T-cell (primary cell): ENCODE measurements at regions of chr20 and their contacts with region 1.

Region 1: DNA sequence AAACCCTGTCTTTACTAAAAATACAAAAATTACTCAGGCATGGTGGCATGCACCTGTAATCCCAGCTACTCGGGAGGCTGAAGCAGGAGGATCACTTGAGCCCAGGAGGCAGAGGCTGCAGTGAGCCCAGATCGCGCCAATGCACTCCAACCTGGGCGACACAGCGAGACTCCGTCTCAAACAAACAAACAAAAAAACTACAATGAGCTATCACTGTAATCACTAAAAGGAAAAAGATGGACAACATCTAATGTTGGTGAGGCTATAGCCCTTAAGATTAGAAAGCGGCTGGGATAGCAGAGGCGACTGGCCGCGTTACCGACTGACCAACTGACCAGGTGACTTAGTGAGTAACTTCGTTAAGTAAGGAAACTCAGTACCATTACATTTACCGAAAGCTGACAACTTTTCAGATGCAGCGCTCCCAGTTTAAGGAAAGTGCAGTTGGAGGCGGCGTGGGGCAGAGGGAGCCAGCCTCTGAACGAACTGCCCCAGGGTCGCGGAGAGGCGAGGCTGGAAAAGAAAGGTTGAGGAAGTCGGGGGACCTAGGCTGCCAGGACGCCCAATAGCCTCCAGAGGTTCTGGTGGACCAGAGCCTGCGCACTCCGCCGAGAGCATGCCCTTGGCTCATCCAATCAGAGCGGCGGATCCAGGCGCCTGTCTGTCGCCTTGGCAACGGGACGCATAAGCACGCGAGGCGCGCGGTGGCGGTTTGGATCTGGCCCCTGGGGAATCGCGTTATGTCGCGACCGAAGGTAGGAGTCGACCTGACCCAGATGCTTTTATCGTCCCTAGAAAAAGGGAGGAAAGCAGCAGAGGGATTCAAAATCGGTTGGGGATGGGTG is 8.9 kb downstream of the TTLL9 start:
- DNase-seq: peak; percentile 47 to 86 (median 66)
- ATAC-seq: peak; percentile 85 to 95 (median 88)
- H3K4me3 ChIP-seq: peak overlapping the region; percentile 65 to 90
- H3K4me3 Mint-ChIP-seq: peak overlapping the region; percentile 88 to 91 (median 88)
- H3K27ac ChIP-seq: no peak overlapping the region
- H3K27ac Mint-ChIP-seq: peak overlapping the region in 1 of 2 donors; percentile 70
- H3K4me1 ChIP-seq: peaks cover 4 to 12% of the 10 kb centered on the region in 2 experiments
- H3K4me1 Mint-ChIP-seq: peaks cover 16 to 19% (median 17%) of the 10 kb centered on the region in 3 donors
- H3K27me3 ChIP-seq: peaks cover 3 to 11% of the 10 kb centered on the region in 2 experiments
- H3K27me3 Mint-ChIP-seq: peaks cover 3 to 9% of the 10 kb centered on the region in 2 donors

Region 2: GRCh38 chr20:31605031-31605901 is 274.1 kb before region 1 on chr20 and contains the start of gene ID1:
- CTCF ChIA-PET with region 1: no interaction called
- POLR2A ChIA-PET with region 1: interaction called in 1 of 2 experiments, 10 read pairs
- DNase-seq: peak; percentile 78 to 93 (median 88)
- ATAC-seq: peak; percentile 93 to 96 (median 94)
- H3K4me3 ChIP-seq: peak within 1 kb of the TSS; percentile 46 to 81
- H3K4me3 Mint-ChIP-seq: peak within 1 kb of the TSS; percentile 85 to 93 (median 88)
- H3K27ac ChIP-seq: no peak within 1 kb of the TSS
- H3K27ac Mint-ChIP-seq: peak within 1 kb of the TSS in 1 of 2 donors; percentile 17
- H3K4me1 ChIP-seq: peaks cover 8 to 29% of the 10 kb centered on the region in 2 experiments
- H3K4me1 Mint-ChIP-seq: peaks cover 28 to 31% (median 30%) of the 10 kb centered on the region in 3 donors
- H3K27me3 ChIP-seq: peaks cover 4 to 82% of the 10 kb centered on the region in 2 experiments
- H3K27me3 Mint-ChIP-seq: peaks cover 20 to 47% of the 10 kb centered on the region in 2 donors
- total RNA-seq, gene ID1: 1.4 to 11.2 (median 2.2) TPM

Region 3: GRCh38 chr20:31851240-31851955 is 28.0 kb before region 1 on chr20:
- CTCF ChIA-PET with region 1: interaction called in 1 of 2 experiments, 11 read pairs
- POLR2A ChIA-PET with region 1: no interaction called
- DNase-seq: no peak
- ATAC-seq: no peak
- H3K4me3 ChIP-seq: no peak overlapping the region
- H3K4me3 Mint-ChIP-seq: no peak overlapping the region
- H3K27ac ChIP-seq: no peak overlapping the region
- H3K27ac Mint-ChIP-seq: no peak overlapping the region
- H3K4me1 ChIP-seq: peaks cover 0 to 6% of the 10 kb centered on the region in 2 experiments
- H3K4me1 Mint-ChIP-seq: peaks cover 0 to 1% (median 0%) of the 10 kb centered on the region in 3 donors
- H3K27me3 ChIP-seq: peaks cover 0 to 51% of the 10 kb centered on the region in 2 experiments
- H3K27me3 Mint-ChIP-seq: peaks cover 15 to 34% of the 10 kb centered on the region in 2 donors

Region 4: DNA sequence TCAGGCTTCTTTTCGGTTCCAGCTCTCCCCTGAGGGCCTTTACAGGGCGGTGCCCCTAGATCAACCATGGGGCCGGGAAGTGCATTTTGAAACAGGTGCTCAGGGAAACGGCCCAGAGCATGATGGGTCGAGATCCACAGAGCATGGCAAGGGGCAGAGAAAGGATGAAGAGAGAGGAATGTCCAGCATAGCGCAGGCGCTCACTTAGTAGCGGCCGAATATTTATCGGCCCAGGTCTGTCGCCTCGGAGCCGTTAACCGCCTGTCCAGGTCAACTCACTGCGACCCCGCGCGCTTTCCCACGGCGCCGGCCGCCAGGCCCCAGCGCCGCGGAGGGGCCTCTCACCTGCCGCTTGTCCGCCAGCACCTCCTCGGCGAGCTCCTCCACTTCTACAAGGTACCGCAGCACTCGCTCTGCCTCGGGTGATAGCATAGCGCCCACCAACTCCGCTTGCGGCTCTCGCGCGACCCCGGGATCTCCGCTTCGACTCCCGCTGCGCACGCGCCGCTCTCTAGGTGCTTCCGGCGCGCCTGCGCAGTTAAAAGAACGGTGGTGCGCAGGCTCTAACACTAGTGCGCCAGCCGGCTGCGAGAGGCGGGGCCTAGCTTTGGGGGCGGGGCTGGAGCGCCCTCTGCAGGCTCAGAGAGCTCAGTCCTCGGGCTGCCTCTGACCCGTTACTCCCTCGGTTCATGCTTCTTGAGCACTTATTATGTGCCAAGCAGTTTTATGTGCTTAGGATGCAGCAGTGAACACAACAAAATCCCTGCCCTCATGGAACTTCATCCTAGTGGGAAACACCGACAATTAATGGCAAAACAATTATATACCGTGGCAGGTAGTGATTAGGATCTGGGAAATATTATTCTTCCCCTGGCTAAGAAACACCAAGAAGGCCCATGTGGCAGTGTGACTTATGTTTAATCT is 72.4 kb after region 1 on chr20 and contains the start of gene PDRG1:
- CTCF ChIA-PET with region 1: interaction called in 1 of 2 experiments, 18 read pairs
- POLR2A ChIA-PET with region 1: interaction called in 1 of 2 experiments, 3 read pairs
- DNase-seq: peak; percentile 90 to 99 (median 95)
- ATAC-seq: peak; percentile 94 to 99 (median 98)
- H3K4me3 ChIP-seq: peak within 1 kb of the TSS; percentile 91 to 95
- H3K4me3 Mint-ChIP-seq: peak within 1 kb of the TSS; percentile 95 to 97 (median 97)
- H3K27ac ChIP-seq: peak within 1 kb of the TSS; percentile 51
- H3K27ac Mint-ChIP-seq: peak within 1 kb of the TSS; percentile 80 to 97
- H3K4me1 ChIP-seq: peaks cover 4 to 23% of the 10 kb centered on the region in 2 experiments
- H3K4me1 Mint-ChIP-seq: peaks cover 31 to 36% (median 34%) of the 10 kb centered on the region in 3 donors
- H3K27me3 ChIP-seq: peaks cover 0 to 17% of the 10 kb centered on the region in 2 experiments
- H3K27me3 Mint-ChIP-seq: peaks cover 6 to 20% of the 10 kb centered on the region in 2 donors
- total RNA-seq, gene PDRG1: 7.5 to 14.5 (median 11.6) TPM